ENCODE measurements at regions of chr1 and their contacts with region 1.

Region 1: GRCh38 chr1:24199289-24199900 is 12.3 kb upstream of the IFNLR1 start:
- DNase-seq: peak; percentile 79
- ATAC-seq: peak; percentile 62

Region 2: GRCh38 chr1:23376890-23377811 is 822.2 kb before region 1 on chr1:
- intact Hi-C with region 1: no loop called
- DNase-seq: peak; percentile 64
- ATAC-seq: peak; percentile 74

Region 3: DNA sequence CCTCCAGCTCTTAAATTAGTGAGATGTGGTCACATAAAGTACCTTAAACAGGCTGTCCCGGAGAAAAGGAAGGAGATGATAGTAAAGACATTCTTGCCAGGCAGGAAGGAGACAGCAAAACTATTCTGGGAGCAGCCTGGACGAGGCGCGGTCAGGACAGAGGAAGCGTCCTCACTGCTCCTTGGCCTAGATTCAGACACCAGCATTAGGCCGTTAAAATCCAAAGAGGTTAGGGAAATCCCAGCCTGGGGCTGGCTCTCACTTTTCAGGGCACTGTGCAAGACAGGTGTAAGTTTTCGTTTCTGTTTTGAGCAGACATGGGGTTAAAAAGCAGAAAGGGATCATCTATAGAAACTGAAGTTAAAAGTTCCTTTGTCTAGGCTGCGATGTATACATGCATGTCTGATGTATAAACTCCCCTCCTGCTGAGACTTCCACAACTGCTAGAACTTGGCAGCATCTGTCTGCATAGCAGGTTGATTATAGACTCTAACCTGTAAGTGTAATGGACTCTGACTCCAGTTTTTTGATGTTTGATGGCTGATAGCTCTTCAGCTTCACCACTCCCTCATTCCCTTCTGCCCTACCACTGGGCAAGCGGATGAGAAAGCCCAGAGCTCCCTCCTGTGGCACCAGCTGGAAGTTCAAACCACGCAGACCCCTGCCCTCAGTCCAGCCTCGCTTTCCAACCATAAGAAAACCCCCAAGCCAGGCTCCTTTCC is 192.6 kb after region 1 on chr1:
- intact Hi-C with region 1: loop called (anchors 5 kb)
- DNase-seq: peak; percentile 80
- ATAC-seq: peak; percentile 89

Measured in sciatic nerve (tissue), 2 donors.